ENCODE measurements at regions of chr4 and their contacts with region 1.

Region 1: GRCh38 chr4:94732358-94732698 is 25.4 kb upstream of the BMPR1B start:
- DNase-seq: no peak
- H3K4me3 ChIP-seq: no peak overlapping the region
- H3K27ac ChIP-seq: no peak overlapping the region
- H3K4me1 ChIP-seq: no peaks in the 10 kb centered on the region
- H3K27me3 ChIP-seq: no peaks in the 10 kb centered on the region
- CTCF ChIP-seq: no peak

Region 2: GRCh38 chr4:94621491-94622080 is 110.7 kb before region 1 on chr4:
- intact Hi-C with region 1: loop called (anchors 5 kb)
- DNase-seq: no peak
- H3K4me3 ChIP-seq: no peak overlapping the region
- H3K27ac ChIP-seq: no peak overlapping the region
- H3K4me1 ChIP-seq: peaks cover 0 to 2% of the 10 kb centered on the region in 2 donors
- H3K27me3 ChIP-seq: no peaks in the 10 kb centered on the region
- CTCF ChIP-seq: peak; percentile 39 to 75 (median 65)

Measured in ascending aorta (tissue), 2 donors.